PC-9 (cell line): ENCODE measurements at regions of chr3 and their contacts with region 1.

Region 1: DNA sequence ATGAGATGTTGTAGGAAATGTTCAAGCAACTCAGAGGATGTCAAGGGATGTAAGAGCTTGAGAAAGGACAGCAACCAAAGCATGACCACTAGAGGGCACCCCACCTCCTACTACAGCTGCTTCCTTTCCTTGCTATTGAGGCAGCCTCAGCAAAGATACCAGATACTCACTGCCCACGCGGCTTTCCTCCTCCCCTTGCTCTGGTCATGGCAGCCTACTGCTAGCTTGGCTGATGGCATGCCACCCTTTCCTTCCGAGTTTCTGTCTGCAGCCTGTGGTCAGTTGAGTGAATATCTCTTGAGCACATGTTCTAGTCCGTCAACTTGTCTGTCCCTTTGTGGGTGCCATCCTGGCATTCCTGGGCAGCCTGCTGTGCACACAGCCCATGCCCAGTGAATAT is 4.4 kb upstream of the CXCR6 start:
- DNase-seq: peak; percentile 73
- H3K4me3 ChIP-seq: no peak overlapping the region
- H3K27ac ChIP-seq: no peak overlapping the region
- H3K4me1 ChIP-seq: peaks cover 8% of the 10 kb centered on the region; the same call in 1 of the 2 replicates
- H3K27me3 ChIP-seq: no peaks in the 10 kb centered on the region
- CTCF ChIP-seq: peak; percentile 86

Region 2: DNA sequence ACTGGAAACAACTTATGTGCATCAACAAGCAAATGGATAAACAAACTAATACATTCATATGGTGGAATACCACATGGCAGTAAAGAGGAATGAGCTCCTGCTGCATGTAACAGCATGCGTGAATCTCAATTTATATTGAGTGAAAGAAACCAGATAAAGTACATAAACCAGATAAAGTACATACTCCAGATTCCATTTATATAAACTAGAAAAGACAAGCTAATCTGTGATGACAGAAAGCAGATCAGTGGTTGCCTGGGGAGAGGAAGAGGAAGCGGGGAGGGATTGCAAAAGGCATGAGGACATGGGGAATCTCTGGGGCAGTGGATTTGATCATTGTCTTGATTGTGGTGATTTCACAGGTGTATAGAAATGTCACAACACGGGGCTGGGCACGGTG is 310.1 kb before region 1 on chr3:
- CTCF ChIA-PET with region 1: no interaction called
- POLR2A ChIA-PET with region 1: no interaction called
- intact Hi-C with region 1: no loop called
- DNase-seq: no peak
- H3K4me3 ChIP-seq: no peak overlapping the region
- H3K27ac ChIP-seq: no peak overlapping the region
- H3K4me1 ChIP-seq: no peaks in the 10 kb centered on the region
- H3K27me3 ChIP-seq: no peaks in the 10 kb centered on the region
- CTCF ChIP-seq: no peak

Region 3: GRCh38 chr3:46208167-46208704 is 269.4 kb after region 1 on chr3 and contains the start of gene CCR1:
- CTCF ChIA-PET with region 1: no interaction called
- POLR2A ChIA-PET with region 1: interaction called, 4 read pairs
- intact Hi-C with region 1: loop called (anchors 1 kb)
- DNase-seq: peak; percentile 52 to 68
- H3K4me3 ChIP-seq: no peak within 1 kb of the TSS
- H3K27ac ChIP-seq: peak within 1 kb of the TSS; percentile 27; the same call in 1 of the 2 replicates
- H3K4me1 ChIP-seq: peaks cover 14% of the 10 kb centered on the region
- H3K27me3 ChIP-seq: no peaks in the 10 kb centered on the region
- CTCF ChIP-seq: peak; percentile 77
- total RNA-seq, gene CCR1: 0.28 TPM in 1 of 2 replicates, not detected in the other

Region 4: GRCh38 chr3:46372492-46373359 is 433.9 kb after region 1 on chr3:
- CTCF ChIA-PET with region 1: interaction called, 4 read pairs
- POLR2A ChIA-PET with region 1: no interaction called
- intact Hi-C with region 1: loop called (anchors 2 kb)
- DNase-seq: no peak
- H3K4me3 ChIP-seq: no peak overlapping the region
- H3K27ac ChIP-seq: no peak overlapping the region
- H3K4me1 ChIP-seq: peaks cover 19% of the 10 kb centered on the region
- H3K27me3 ChIP-seq: no peaks in the 10 kb centered on the region
- CTCF ChIP-seq: peak; percentile 76